AG04449 (cell line): ENCODE measurements at regions of chr14 and their contacts with region 1.

Region 1: GRCh38 chr14:68977718-68978171 is 1.4 kb downstream of the ACTN1 start:
- DNase-seq: peak; percentile 89
- H3K4me3 ChIP-seq: peak overlapping the region; percentile 98
- CTCF ChIP-seq: peak; percentile 40

Region 2: GRCh38 chr14:68874746-68875155 is 103.0 kb before region 1 on chr14:
- CTCF ChIA-PET with region 1: no interaction called
- POLR2A ChIA-PET with region 1: no interaction called
- DNase-seq: no peak
- H3K4me3 ChIP-seq: no peak overlapping the region
- CTCF ChIP-seq: no peak

Region 3: DNA sequence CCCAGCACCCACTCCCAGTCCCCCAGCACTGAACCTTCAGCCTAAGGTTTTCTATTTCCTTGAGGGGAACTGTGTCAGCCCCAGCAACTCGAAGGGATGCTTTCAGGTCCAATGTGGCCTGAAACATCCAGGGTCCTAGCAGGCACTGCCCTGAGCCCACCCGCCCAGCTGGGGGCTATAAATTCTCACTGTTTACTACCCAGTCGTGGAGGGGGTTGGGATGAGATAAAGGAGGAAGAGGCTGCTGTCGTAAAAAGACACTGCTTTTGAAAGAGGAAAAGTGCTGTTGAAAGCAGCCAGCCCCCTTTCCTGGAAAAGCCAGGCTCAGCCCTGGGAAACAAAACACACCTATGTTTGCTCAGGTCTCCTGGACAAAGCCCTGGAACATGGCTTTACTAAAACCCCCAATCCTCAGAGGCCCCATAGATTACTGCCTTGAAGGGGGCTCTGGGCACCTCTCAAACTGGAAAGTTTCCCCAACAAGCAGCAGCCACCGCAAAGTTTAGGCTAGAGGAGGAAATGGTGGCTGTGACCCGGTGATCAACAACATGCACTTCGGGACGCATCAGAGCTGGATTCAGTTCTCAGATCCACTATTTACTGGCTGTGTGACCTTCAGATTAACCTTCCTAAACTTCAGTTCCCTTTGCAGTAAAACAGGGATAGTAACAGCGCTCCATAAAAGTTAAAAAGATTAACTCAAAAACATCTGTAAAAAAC is 49.6 kb before region 1 on chr14:
- CTCF ChIA-PET with region 1: no interaction called
- POLR2A ChIA-PET with region 1: no interaction called
- DNase-seq: no peak
- H3K4me3 ChIP-seq: no peak overlapping the region
- CTCF ChIP-seq: no peak

Region 4: DNA sequence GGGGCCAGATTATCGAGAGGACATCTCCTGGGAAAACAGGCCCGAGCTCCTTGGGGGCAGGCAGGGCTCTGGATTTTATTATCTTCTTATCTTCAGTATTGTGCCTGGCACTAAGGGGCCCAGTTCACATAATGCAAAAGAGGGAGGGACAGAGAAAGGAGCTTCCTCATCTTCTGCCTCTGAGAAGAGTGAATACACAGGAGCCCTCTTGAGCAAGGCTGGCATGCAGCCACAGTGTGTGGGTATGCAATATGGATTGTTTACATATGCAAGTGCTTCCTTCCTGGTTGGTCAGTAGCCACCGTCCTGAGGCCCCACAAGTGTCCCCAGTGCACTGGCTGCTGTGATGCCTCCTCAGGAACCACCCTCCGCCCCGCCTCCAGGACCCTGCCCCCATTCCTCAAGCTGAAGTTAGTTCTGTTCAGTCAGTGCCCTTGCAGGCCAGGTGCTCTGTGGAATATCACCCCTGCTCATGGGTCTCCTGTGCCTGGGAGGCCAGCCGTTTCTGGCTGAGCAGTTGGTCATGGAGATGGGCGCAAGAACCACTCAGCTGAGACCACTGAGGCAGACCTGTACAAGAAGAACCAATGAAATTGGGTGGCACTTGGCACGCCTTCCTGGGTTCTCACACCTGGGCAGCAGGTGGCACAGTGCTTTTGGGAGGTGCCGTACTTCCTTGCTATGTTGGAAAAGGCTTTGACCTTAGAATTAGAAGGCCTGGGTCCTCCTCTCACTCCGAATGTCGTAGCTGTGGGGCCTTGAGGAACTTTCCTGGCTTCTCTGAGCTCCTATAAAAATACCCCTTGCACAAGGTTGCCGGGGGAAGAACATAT is 36.4 kb after region 1 on chr14:
- CTCF ChIA-PET with region 1: no interaction called
- POLR2A ChIA-PET with region 1: no interaction called
- DNase-seq: peak; percentile 44
- H3K4me3 ChIP-seq: no peak overlapping the region
- CTCF ChIP-seq: no peak

Region 5: DNA sequence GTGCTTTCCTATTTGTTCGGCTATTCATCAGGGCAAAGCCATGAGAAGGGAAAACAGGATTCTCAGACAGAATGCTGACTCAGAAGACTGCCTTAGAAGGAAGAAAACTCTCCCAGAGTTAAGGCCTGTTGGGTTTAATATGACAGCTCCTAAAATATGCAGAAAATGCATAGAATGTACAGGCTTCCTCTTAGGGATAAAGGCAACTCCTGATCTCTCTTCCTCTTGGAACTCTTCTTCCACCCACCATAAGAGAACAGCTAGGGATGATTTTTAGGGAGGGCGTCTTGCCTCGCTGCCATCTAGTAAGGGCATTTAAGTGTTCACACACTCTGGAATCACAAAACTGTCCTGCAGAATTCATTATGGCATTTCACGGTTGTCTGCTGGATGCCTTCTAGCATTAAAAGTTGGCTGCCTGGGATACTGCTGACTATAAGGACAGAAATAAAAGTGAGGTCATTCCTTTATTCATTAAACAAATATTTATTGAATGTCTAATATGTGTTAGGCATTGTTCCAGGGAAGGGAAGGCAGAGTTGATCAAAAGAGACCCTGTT is 101.5 kb after region 1 on chr14:
- CTCF ChIA-PET with region 1: interaction called, 4 read pairs
- POLR2A ChIA-PET with region 1: interaction called, 15 read pairs
- DNase-seq: no peak
- H3K4me3 ChIP-seq: no peak overlapping the region
- CTCF ChIP-seq: no peak